Mucosa of descending colon (tissue), 3 donors: ENCODE measurements at regions of chr4 and their contacts with region 1.

Region 1: GRCh38 chr4:182806259-182807252 is 110.6 kb downstream of the DCTD start:
- DNase-seq: peak in 2 of 3 donors; percentile 76 to 81
- ATAC-seq: peak; percentile 81
- H3K4me3 ChIP-seq: no peak overlapping the region
- H3K4me1 ChIP-seq: no peaks in the 10 kb centered on the region
- CTCF ChIP-seq: peak; percentile 76

Region 2: DNA sequence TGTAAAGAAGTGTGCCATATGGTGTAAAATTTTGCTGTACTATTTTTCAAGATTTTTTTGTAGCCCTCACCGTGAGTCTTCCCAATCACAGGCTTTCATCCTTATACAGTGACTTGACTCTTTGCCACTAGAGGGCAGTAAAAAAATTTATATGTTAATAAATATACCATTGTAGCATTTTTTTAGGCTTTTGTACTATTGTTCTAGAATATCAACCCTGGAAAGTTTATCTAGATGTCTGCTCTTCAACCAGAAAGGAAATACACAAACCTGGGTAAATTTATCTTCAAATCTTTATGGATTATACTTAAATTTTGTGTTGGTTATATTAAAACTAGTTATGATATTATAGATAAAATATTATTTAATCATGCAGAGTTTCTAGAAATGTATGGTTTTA is 328.1 kb before region 1 on chr4:
- intact Hi-C with region 1: loop called (anchors 5 to 10 kb)
- DNase-seq: no peak
- ATAC-seq: no peak
- H3K4me3 ChIP-seq: no peak overlapping the region
- H3K4me1 ChIP-seq: no peaks in the 10 kb centered on the region
- CTCF ChIP-seq: no peak